PC-9 (cell line): ENCODE measurements at regions of chr3 and their contacts with region 1.

Region 1: GRCh38 chr3:188749010-188749617 is 422.7 kb upstream of the TPRG1 start:
- DNase-seq: peak in 1 of 2 experiments; percentile 28
- H3K4me3 ChIP-seq: no peak overlapping the region
- H3K27ac ChIP-seq: no peak overlapping the region
- H3K4me1 ChIP-seq: no peaks in the 10 kb centered on the region
- H3K27me3 ChIP-seq: no peaks in the 10 kb centered on the region
- CTCF ChIP-seq: peak; percentile 71

Region 2: GRCh38 chr3:188389711-188390342 is 359.3 kb before region 1 on chr3:
- CTCF ChIA-PET with region 1: no interaction called
- POLR2A ChIA-PET with region 1: no interaction called
- intact Hi-C with region 1: no loop called
- DNase-seq: no peak
- H3K4me3 ChIP-seq: no peak overlapping the region
- H3K27ac ChIP-seq: no peak overlapping the region
- H3K4me1 ChIP-seq: peaks cover 14% of the 10 kb centered on the region; the same call in 1 of the 2 replicates
- H3K27me3 ChIP-seq: no peaks in the 10 kb centered on the region
- CTCF ChIP-seq: no peak

Region 3: DNA sequence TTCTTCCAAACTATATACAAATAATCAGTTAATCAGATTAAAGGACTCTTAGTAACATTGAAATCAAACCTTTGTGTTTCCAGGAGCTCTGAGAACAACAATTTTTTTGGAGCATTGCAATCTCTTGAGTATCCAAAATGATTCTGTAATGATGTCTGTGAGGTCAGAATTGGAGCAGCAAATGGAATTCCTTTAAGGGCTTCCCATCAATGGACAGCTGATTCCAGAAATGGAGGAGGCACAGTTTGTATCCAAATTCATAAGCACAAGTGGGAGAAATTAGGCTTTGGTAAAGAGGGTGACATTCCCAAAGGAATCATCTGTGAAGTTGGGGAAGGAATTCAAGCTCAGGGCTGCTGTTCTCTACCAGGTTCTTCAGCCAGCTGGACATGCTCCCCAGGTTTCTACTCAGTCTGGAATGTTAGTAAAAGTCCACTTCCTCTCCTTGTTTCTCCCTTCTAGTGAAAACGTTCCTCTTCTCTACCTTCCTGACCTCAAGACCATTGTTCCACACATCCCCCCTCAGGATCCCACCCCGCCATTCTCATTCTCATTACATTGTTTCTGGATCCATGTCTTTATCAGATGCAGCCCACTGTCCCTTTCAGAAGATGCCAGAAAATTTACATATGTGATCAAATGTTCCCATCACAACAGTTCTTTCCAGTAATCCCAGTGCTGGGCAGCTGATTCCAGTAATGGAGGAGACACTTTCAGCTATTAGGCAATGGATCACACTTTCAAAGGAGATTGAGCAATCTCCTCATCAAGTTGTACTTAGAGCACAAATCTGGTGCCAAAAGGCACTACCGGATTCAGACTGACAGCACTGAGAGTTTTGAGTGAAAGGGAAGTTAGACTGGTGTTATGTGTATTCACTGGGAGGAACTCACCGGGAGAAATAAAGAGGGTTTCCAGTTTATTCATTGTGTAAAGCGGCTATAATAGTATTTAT is 31.4 kb after region 1 on chr3:
- CTCF ChIA-PET with region 1: no interaction called
- POLR2A ChIA-PET with region 1: interaction called, 28 read pairs
- intact Hi-C with region 1: no loop called
- DNase-seq: no peak
- H3K4me3 ChIP-seq: no peak overlapping the region
- H3K27ac ChIP-seq: no peak overlapping the region
- H3K4me1 ChIP-seq: no peaks in the 10 kb centered on the region
- H3K27me3 ChIP-seq: no peaks in the 10 kb centered on the region
- CTCF ChIP-seq: no peak